GM10248 (cell line): ENCODE measurements at regions of chr3 and their contacts with region 1.

Region 1: DNA sequence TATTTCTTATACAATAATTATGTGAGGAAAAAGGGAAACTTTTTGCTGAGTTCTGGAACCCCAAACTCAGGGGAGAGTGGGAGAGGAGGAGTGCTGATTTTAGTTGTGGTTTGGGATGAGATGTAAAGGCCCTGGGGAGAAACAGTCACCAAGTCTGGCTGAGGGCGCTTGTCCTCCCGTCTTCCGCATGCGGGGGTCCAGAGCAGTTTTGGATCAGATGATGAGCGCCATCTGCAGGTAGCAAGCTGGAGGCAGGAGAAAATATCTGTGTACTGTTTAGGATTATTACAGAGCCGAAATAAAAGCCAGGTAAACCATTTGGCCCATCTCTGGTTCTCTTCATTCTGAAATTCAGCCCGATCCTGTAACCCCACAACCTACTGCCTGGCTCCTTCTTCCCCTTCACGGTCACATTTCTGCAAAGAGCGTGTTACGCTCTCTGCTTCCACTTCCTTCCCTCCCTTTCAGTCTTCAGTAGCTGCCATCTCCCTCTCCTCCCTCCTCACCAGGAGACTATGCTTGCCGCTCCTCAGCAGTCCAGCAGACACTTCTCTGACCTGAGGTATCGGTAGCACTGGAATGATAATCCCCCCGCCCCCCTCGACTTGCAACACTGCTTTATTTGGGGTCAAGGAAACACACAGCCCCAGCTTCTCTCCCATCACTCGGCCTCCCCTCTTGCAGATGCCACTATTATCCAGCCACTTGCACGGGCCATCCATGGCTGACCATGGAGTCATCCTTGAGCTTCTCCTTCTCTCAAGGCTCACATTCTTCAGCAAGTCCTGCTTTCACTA is 1.4 kb upstream of the PARP14 start:
- DNase-seq: peak; percentile 67
- CTCF ChIP-seq: peak; percentile 72

Region 2: DNA sequence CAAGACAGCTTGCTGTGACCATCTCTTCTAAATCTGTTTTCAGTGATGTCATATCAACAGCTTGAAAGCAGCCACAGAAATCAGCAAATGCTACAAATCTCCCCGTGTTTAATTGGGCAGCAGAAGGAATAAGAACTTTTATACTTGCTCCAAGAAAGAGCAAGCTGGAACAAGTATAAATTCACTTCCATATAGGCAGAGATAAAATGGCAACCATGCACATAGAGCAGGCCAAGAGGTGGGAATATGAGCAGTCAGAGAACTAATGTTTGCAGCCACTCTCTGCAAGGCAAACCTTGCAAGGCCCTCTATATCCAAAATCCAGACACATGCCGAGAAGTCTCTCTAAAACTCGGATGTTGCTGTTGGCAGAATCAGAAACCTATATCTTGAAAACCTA is 131.2 kb before region 1 on chr3:
- CTCF ChIA-PET with region 1: interaction called, 15 read pairs
- POLR2A ChIA-PET with region 1: no interaction called
- DNase-seq: no peak
- CTCF ChIP-seq: no peak

Region 3: GRCh38 chr3:122572940-122573412 is 106.3 kb before region 1 on chr3:
- CTCF ChIA-PET with region 1: interaction called, 28 read pairs
- POLR2A ChIA-PET with region 1: no interaction called
- DNase-seq: peak; percentile 49
- CTCF ChIP-seq: no peak

Region 4: DNA sequence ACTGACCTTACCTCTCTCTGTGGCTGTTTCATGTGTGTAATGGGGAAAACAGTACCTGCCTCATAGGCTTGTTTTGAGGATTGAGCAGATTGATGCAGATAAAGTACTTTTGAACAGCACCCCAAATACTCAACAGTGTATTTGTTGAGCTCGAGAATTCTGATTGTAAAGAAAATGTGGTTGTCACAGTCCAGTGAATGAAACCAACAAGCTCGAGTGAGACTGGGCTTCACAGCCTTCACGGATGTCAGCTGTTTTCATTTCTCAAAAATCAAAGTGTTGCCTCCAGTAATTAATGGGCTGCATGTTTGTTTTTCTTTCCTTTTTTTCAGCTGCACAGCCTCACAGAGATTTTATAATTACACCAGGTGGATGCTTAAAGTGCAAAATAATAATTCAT is 58.2 kb before region 1 on chr3:
- CTCF ChIA-PET with region 1: interaction called, 21 read pairs
- POLR2A ChIA-PET with region 1: interaction called, 3 read pairs
- DNase-seq: peak; percentile 42
- CTCF ChIP-seq: no peak

Region 5: DNA sequence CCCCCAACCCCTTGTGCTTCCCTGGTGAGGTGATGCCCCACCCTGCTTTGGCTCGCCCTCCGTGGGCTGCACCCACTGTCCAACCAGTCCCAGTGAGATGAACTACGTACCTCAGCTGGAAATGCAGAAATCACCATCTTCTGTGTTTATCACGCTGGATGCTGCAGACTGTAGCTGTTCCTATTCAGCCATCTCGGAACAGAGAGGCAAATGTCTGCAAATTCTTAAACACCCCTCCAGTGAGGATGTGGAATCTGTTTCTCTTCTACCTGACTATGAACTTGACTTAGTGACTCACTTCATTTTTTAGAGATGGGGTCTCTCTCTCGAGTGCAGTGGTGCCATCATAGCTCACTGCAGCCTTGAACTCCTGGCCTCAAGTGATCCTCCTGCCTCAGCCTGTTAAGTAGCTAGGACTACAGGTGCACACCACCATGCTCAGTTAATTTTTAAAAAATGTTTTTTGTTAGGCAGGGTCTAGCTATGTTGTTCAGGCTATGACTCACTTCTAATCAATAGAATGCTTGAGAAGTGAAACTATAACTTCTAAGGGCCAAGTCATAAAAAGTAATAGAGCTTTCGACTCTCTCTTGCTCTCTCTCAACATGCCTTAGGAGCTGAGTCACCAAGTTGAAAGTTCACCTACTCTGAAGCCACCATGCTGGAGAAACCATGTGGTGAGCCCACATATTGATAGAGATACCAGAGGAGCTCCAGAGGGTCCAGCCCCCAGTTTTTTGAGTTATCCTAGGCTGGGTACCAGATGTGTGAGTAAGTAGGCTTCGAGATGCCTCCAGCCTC is 10.2 kb before region 1 on chr3:
- CTCF ChIA-PET with region 1: interaction called, 24 read pairs
- POLR2A ChIA-PET with region 1: no interaction called
- DNase-seq: peak; percentile 40
- CTCF ChIP-seq: no peak

Region 6: DNA sequence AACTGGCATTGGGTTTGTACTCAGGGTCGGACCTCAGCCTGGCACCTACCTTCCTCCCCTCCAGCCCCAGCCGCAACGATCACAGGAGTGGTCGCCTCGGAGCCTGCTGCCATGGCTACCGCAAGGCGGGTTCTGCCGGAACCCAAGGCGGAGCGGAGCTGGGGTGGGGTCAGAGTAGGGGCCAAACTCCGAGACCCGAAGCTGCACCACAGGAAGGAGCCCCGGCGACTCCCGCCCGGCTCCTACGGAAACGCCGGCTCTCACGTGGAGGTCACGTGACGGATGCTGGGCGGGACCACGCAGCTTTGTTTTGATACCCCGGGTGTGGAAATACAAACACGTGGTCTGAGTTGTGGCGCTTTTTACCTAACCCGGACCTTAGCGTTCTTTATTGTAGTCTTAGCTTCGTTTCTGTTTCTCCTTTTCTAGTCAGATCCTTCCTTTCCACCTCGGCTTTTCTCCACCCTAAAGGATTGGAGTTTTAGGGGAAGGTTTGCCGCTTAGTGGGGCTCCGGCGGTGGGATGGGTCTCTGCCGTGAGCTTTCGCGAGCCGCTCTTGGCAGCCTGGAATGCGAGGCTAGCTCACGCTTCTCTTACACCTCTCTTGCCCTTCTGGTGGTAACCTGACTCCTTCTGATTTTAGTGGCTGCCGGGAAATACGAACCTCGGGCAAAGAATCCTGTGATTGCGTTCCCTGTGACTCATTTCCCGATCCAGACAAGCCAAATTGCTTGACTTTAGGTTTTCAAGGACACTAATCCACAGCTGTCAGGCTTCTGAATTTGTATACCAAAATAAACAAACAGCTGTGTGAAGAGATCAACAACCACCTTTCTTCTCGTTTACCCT is 114.5 kb after region 1 on chr3 and contains the start of gene HSPBAP1:
- CTCF ChIA-PET with region 1: no interaction called
- POLR2A ChIA-PET with region 1: no interaction called
- DNase-seq: peak; percentile 92
- CTCF ChIP-seq: no peak

Region 7: GRCh38 chr3:123152687-123153086 is 473.4 kb after region 1 on chr3:
- CTCF ChIA-PET with region 1: no interaction called
- POLR2A ChIA-PET with region 1: no interaction called
- DNase-seq: no peak
- CTCF ChIP-seq: no peak